HAP-1 (cell line): ENCODE measurements at regions of chr16 and their contacts with region 1.

Region 1: GRCh38 chr16:58129097-58129936 is at the start of gene CFAP20:
- DNase-seq: peak; percentile 98 to 100
- H3K4me3 ChIP-seq: peak within 1 kb of the TSS; percentile 84
- H3K4me1 ChIP-seq: peaks cover 25% of the 10 kb centered on the region
- H3K27me3 ChIP-seq: no peaks in the 10 kb centered on the region

Region 2: GRCh38 chr16:58025351-58026138 is 103.8 kb before region 1 on chr16 and contains the start of gene MMP15:
- in situ Hi-C with region 1: loop called (anchors 10 kb)
- DNase-seq: peak; percentile 53 to 84
- H3K4me3 ChIP-seq: peak within 1 kb of the TSS; percentile 52
- H3K4me1 ChIP-seq: peaks cover 3% of the 10 kb centered on the region; the same call in 1 of the 2 replicates
- H3K27me3 ChIP-seq: no peaks in the 10 kb centered on the region